ENCODE measurements at regions of chr14 and their contacts with region 1.

Region 1: DNA sequence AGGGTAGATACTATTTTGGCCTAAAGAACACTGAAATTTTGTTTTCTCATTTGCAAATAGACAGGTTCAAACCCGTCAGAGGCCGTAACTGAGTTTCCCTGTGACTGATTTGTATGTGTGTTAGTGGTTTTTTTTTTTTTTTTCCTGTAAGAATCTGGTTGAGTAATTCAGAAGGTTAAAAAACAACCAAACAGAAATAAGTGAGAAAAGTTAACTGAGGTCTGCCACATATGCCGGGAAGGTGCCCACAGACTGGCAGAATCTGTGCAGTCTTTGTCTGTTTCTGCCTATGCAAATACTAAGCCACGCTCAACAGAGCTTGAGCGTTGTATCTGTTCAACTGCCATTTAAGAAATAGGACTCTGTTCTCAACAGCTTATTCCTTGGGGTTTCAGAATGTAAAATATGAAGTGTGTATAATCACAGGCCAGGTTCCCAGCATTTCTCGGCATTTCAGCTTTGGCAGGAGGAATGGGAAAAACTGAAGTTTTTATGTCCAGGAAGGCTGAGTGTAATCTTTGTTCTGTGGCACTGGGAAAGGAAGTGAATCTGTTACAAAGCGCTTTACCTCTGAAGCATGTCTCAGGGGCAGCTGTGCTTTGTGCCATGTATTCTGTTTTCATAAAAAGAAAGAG is 181.9 kb downstream of the PRKCH start:
- DNase-seq: no peak
- ATAC-seq: no peak
- H3K4me3 ChIP-seq: no peak overlapping the region
- H3K27ac ChIP-seq: no peak overlapping the region
- H3K4me1 ChIP-seq: peaks cover 6% of the 10 kb centered on the region; the same call in 1 of the 2 replicates
- H3K27me3 ChIP-seq: no peaks in the 10 kb centered on the region
- CTCF ChIP-seq: no peak

Region 2: DNA sequence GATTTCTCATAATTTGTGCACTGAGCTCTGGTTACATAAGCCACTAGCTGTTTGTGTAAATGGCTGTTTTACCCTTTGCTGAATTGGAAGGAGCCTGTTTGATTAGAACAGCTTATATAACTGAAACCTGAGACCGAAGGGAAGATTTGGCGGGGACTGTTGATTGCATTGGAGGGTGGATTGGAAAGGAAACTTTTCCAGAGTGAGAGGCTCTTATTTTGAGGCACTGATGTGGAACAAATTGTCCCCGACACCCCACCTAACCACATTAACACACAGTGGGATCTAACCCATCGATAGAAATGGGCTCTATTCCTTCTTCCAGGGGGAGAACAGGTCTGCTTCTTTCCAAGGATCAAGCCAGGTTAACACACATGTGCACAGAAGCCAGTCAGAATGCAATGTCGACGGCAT is 273.8 kb before region 1 on chr14:
- CTCF ChIA-PET with region 1: no interaction called
- POLR2A ChIA-PET with region 1: no interaction called
- intact Hi-C with region 1: no loop called
- DNase-seq: peak; percentile 22
- ATAC-seq: peak; percentile 62
- H3K4me3 ChIP-seq: no peak overlapping the region
- H3K27ac ChIP-seq: no peak overlapping the region
- H3K4me1 ChIP-seq: no peaks in the 10 kb centered on the region
- H3K27me3 ChIP-seq: no peaks in the 10 kb centered on the region
- CTCF ChIP-seq: no peak

Region 3: DNA sequence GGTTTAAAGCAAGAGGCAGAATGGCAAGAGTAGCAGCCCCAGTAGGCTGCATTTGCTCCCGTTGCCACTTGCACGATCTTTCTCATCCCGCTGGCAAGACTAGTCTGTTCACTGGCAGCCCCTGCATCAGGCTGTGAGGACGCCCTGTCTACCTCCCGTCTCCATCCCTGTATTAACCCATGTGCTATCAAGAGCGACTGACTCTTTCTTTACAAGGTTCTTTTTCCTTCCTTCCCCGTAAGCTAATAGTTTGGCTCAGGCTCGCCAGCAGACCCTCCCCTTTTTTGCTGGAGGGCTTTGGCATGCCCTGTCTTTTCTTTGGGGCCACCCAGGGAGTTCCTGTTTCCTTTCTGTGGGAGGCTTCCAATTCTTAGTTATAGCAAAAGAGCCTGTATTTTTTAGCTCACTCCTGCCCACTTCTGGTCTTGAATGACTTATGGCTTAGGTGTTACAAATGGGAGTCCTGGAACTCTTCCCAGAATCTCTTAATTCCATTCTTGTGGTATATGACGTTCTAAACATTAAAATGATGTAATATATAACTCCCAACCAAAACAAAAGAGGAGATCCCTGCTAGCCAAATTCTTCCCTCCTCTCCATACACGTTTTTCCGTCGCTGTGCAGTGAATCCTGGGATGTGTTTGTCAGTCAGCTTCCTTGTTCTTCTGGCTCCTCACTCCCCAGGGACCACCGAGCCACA is 32.9 kb before region 1 on chr14:
- CTCF ChIA-PET with region 1: no interaction called
- POLR2A ChIA-PET with region 1: no interaction called
- intact Hi-C with region 1: no loop called
- DNase-seq: peak; percentile 92
- ATAC-seq: peak; percentile 39
- H3K4me3 ChIP-seq: no peak overlapping the region
- H3K27ac ChIP-seq: peak overlapping the region; percentile 93
- H3K4me1 ChIP-seq: peaks cover 58% of the 10 kb centered on the region
- H3K27me3 ChIP-seq: no peaks in the 10 kb centered on the region
- CTCF ChIP-seq: peak; percentile 72

Region 4: DNA sequence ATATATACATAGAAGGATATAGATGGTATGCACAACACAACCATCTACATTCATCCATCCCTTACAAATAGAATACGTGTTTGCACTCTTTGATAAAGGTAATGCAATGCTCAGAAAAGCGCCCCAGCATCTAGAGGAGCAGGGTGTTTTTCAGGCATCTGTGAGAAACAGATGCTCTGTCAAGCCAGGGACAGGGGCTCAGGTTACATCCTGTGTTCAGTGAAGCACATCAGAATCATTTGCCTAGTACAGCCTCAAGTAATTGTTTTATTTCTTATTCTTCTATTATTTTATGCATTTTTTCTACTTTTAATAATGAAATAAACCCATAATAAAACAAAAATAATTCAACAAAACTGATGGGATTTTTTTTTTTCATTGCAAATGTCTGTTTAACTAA is 141.6 kb after region 1 on chr14:
- CTCF ChIA-PET with region 1: no interaction called
- POLR2A ChIA-PET with region 1: interaction called, 17 read pairs
- intact Hi-C with region 1: no loop called
- DNase-seq: peak; percentile 53
- ATAC-seq: peak; percentile 34
- H3K4me3 ChIP-seq: no peak overlapping the region
- H3K27ac ChIP-seq: no peak overlapping the region
- H3K4me1 ChIP-seq: peaks cover 53% of the 10 kb centered on the region
- H3K27me3 ChIP-seq: no peaks in the 10 kb centered on the region
- CTCF ChIP-seq: no peak

Region 5: DNA sequence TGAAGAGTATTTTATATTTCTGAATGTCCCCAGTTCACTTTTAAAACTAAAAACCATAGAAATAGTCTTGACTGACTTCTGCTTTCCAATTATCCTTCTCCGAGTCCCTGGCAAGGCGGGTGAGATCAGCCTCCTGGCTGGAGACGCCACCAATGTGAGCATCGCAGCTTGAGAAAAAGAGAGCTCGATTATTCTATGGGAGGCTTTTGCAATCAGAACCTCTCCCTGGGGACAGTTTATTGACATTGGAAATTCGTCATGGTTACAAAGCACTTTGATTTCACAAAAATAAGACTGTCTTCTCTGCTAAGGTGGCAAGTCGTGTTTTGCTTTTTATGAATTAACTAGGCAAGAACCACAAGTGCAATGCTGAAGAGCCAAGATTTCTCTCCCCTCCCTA is 1839.1 kb after region 1 on chr14:
- CTCF ChIA-PET with region 1: interaction called, 15 read pairs
- POLR2A ChIA-PET with region 1: no interaction called
- intact Hi-C with region 1: no loop called
- DNase-seq: peak; percentile 31
- ATAC-seq: no peak
- H3K4me3 ChIP-seq: no peak overlapping the region
- H3K27ac ChIP-seq: no peak overlapping the region
- H3K4me1 ChIP-seq: peaks cover 24% of the 10 kb centered on the region
- H3K27me3 ChIP-seq: no peaks in the 10 kb centered on the region
- CTCF ChIP-seq: no peak

Measured in PC-3 (cell line).